Calu3 (cell line): ENCODE measurements at regions of chr14 and their contacts with region 1.

Region 1: DNA sequence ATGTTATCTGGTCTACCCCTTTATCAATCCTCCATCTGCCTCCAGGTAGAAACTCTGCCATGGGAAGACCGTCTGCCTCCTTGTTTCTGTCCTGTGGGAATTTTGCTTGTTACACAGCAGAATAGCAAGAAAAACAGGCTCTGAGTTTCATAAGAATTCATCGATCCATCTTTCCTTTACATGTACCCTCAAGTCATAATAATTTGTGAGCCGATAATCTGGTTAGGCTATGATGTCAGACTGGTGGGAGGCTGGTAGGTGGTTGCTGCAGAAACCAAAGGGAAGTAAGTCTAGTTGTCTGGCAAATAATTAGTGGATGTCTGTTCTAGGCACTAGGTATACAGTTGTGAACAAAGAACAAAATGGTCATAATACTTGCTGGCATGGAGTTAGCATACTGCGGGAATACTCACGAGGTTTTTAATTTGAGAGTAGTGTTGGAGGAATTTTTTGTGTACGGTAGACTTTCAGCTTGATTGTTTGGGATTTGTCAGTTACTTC is 8.8 kb downstream of the SUSD6 start:
- DNase-seq: peak; percentile 70
- H3K4me3 Mint-ChIP-seq: peak overlapping the region; percentile 60
- H3K27ac Mint-ChIP-seq: peak overlapping the region; percentile 94
- H3K4me1 Mint-ChIP-seq: peaks cover 76% of the 10 kb centered on the region
- H3K27me3 Mint-ChIP-seq: no peaks in the 10 kb centered on the region
- CTCF ChIP-seq: no peak

Region 2: GRCh38 chr14:69650948-69651369 is 30.8 kb after region 1 on chr14:
- CTCF ChIA-PET with region 1: interaction called, 4 read pairs
- intact Hi-C with region 1: loop called (anchors 2 kb)
- DNase-seq: peak; percentile 22
- H3K4me3 Mint-ChIP-seq: peak overlapping the region; percentile 17
- H3K27ac Mint-ChIP-seq: peak overlapping the region; percentile 57
- H3K4me1 Mint-ChIP-seq: peaks cover 73% of the 10 kb centered on the region
- H3K27me3 Mint-ChIP-seq: no peaks in the 10 kb centered on the region
- CTCF ChIP-seq: no peak